ENCODE measurements at regions of chr12 and their contacts with region 1.

Region 1: GRCh38 chr12:89352492-89353187 is at the start of gene DUSP6:
- DNase-seq: peak; percentile 97
- H3K4me3 Mint-ChIP-seq: peak within 1 kb of the TSS; percentile 89
- H3K27ac Mint-ChIP-seq: peak within 1 kb of the TSS; percentile 92
- H3K4me1 Mint-ChIP-seq: peaks cover 29% of the 10 kb centered on the region
- H3K27me3 Mint-ChIP-seq: peaks cover 2% of the 10 kb centered on the region
- total RNA-seq, gene DUSP6: 24.8 to 26.1 TPM

Region 2: DNA sequence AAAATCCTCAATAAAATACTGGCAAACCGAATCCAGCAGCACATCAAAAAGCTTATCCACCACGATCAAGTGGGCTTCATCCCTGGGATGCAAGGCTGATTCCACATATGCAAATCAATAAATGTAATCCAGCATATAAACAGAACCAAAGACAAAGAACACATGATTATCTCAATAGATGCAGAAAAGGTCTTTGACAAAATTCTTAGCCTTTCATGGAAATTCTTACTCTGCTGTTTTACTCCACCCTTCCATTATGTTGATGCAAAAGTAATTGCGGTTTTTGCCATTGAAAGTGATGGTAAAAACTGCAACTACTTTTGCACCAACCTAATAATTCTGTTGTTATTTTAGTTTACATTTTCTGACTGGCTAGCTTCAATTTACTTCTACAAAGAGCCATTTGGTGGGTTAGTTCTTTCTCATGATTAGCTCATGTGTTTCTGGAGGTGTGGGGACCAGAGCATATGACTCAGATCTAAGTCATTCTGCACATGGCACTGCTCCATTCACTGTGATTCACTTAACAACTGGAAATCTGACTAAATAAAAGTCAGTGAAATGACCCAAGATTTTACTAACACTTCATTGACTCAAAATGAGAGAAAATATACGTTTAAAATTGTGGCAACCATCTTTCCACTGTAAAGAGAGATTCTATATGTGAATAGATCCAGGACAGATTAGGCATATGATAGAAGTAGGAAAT is 1110.6 kb before region 1 on chr12:
- CTCF ChIA-PET with region 1: no interaction called
- intact Hi-C with region 1: loop called (anchors 2 kb)
- DNase-seq: peak; percentile 65
- H3K4me3 Mint-ChIP-seq: no peak overlapping the region
- H3K27ac Mint-ChIP-seq: peak overlapping the region; percentile 68
- H3K4me1 Mint-ChIP-seq: peaks cover 36% of the 10 kb centered on the region
- H3K27me3 Mint-ChIP-seq: peaks cover 14% of the 10 kb centered on the region

Region 3: GRCh38 chr12:89051065-89051677 is 301.5 kb before region 1 on chr12:
- CTCF ChIA-PET with region 1: interaction called, 3 read pairs
- intact Hi-C with region 1: loop called (anchors 1 kb)
- DNase-seq: peak; percentile 37
- H3K4me3 Mint-ChIP-seq: no peak overlapping the region
- H3K27ac Mint-ChIP-seq: no peak overlapping the region
- H3K4me1 Mint-ChIP-seq: peaks cover 10% of the 10 kb centered on the region
- H3K27me3 Mint-ChIP-seq: no peaks in the 10 kb centered on the region

Region 4: GRCh38 chr12:89162704-89163261 is 189.9 kb before region 1 on chr12:
- CTCF ChIA-PET with region 1: no interaction called
- intact Hi-C with region 1: loop called (anchors 1 kb)
- DNase-seq: peak; percentile 81
- H3K4me3 Mint-ChIP-seq: no peak overlapping the region
- H3K27ac Mint-ChIP-seq: no peak overlapping the region
- H3K4me1 Mint-ChIP-seq: peaks cover 8% of the 10 kb centered on the region
- H3K27me3 Mint-ChIP-seq: no peaks in the 10 kb centered on the region

Region 5: GRCh38 chr12:89261982-89262381 is 90.7 kb before region 1 on chr12:
- CTCF ChIA-PET with region 1: interaction called, 3 read pairs
- intact Hi-C with region 1: loop called (anchors 1 kb)
- DNase-seq: no peak
- H3K4me3 Mint-ChIP-seq: no peak overlapping the region
- H3K27ac Mint-ChIP-seq: no peak overlapping the region
- H3K4me1 Mint-ChIP-seq: peaks cover 24% of the 10 kb centered on the region
- H3K27me3 Mint-ChIP-seq: no peaks in the 10 kb centered on the region

Region 6: DNA sequence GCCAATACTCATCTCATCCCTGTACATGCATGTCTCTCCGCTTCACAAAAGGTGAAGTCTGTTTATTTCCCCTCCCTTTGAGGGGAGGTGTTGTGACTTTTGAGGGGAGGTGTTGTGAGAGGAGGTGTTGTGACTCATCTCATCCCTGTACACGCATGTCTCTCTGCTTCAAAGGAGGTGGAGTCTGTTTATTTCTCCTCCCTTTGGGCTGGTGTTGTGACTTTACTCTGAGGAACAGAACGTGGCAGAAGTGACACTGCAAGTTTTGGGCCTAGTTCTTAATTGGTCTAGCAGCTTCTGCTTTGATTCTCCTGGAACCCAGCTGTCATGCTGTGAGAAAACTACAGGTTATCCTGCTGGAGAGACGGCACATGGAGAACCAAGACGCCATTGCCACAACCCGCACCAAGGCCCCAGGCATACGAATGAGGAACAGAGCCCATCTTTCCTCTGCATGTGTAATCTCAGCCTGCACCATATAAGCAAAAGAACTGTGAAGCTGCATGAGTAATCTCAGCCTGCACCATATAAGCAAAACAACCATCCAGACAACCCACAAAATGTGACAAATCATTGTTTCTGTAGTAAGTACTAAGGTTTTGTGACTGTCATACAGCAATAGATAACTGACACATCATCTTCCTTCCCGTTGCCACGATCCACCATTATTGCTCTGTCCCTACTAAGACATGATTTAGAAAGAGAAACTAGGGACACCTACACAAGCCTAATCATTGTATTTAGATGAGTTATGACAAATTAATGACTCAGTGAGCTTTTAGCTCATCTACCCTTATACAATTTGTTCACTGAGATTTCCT is 142.0 kb after region 1 on chr12:
- CTCF ChIA-PET with region 1: no interaction called
- intact Hi-C with region 1: loop called (anchors 1 kb)
- DNase-seq: peak; percentile 73
- H3K4me3 Mint-ChIP-seq: peak overlapping the region; percentile 5
- H3K27ac Mint-ChIP-seq: peak overlapping the region; percentile 77
- H3K4me1 Mint-ChIP-seq: peaks cover 17% of the 10 kb centered on the region
- H3K27me3 Mint-ChIP-seq: no peaks in the 10 kb centered on the region

Region 7: DNA sequence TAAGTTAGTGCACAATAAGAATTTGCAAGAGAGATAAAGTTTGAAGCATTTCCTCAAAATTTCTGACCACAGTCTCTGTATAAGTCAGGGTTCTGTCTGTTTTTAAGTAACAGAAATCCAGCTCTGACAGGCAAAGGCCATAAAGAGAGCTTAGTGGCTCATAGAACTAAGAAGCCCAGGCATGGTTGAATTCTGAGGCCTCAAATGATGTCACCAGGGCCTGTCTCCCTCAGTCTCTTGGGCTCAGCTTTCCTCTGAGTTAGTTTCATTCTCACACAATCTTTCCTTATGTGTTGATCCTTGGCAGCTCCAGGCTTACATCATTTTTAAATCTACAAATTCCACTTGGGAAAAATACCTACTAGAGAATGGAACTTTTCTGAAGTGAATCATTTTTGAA is 529.4 kb after region 1 on chr12:
- CTCF ChIA-PET with region 1: no interaction called
- intact Hi-C with region 1: loop called (anchors 5 kb)
- DNase-seq: peak; percentile 53
- H3K4me3 Mint-ChIP-seq: no peak overlapping the region
- H3K27ac Mint-ChIP-seq: peak overlapping the region; percentile 63
- H3K4me1 Mint-ChIP-seq: peaks cover 42% of the 10 kb centered on the region
- H3K27me3 Mint-ChIP-seq: no peaks in the 10 kb centered on the region

Measured in activated naive CD4-positive, alpha-beta T cell treated with anti-CD3 and anti-CD28 coated beads for 36 hours (primary cell).